A549 (cell line): ENCODE measurements at regions of chr1 and their contacts with region 1.

Region 1: GRCh38 chr1:181189691-181190363 is 101.3 kb downstream of the IER5 start:
- DNase-seq: peak; percentile 63 to 85
- ATAC-seq: peak; percentile 84 to 97
- H3K4me3 ChIP-seq: peak overlapping the region; percentile 33
- H3K27ac ChIP-seq: peak overlapping the region in 1 of 2 experiments; percentile 74; a peak in 4 of 6 replicates
- H3K4me1 ChIP-seq: no peaks in the 10 kb centered on the region
- CTCF ChIP-seq: peak; percentile 97
- EP300 ChIP-seq: no peak
- POLR2A ChIP-seq: no peak
- RAD21 ChIP-seq: peak; percentile 92 to 99

Region 2: DNA sequence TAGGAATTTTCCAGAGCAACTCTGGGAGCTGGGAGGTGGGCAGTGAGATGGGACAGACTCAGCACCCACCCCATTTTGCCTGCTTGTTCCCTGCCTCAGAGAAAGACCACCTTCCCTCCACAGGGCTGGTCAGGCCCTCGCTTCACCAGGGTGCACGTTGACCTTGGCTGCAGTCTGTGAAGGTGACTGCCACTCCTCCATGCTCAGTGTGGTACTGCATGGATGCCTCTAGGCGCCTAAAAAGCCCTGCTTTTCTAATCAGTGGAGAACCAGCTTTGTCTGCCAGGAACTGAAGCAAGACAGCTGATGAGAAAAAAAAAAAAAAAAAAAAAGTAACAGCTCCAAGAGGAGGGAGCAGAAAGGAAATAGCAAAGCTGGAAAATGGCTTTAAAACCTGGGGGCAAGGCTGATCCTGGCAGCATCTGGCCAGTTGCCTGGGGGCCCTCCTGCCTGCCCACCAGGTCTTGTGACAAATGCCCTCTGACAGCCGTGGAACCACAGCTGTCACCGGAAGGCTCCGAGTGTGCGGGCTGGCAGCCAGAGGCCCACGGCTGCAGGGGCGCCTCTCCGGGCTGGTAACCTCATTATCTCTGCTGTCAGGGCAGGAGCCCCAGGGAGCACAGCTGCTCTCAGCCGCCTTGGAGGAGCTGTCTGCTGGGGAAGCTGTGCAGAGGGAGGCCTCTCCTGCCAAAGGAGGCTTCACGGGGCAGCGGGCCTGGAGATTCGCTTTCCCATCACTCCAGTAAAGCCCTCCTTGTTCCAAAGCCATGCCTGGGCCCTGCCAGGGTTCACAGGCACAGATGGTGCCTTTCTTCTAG is 263.5 kb before region 1 on chr1:
- CTCF ChIA-PET with region 1: no interaction called
- POLR2A ChIA-PET with region 1: no interaction called
- DNase-seq: no peak
- ATAC-seq: no peak
- H3K4me3 ChIP-seq: no peak overlapping the region
- H3K27ac ChIP-seq: no peak overlapping the region
- H3K4me1 ChIP-seq: no peaks in the 10 kb centered on the region
- CTCF ChIP-seq: no peak
- EP300 ChIP-seq: no peak
- POLR2A ChIP-seq: no peak
- RAD21 ChIP-seq: no peak

Region 3: DNA sequence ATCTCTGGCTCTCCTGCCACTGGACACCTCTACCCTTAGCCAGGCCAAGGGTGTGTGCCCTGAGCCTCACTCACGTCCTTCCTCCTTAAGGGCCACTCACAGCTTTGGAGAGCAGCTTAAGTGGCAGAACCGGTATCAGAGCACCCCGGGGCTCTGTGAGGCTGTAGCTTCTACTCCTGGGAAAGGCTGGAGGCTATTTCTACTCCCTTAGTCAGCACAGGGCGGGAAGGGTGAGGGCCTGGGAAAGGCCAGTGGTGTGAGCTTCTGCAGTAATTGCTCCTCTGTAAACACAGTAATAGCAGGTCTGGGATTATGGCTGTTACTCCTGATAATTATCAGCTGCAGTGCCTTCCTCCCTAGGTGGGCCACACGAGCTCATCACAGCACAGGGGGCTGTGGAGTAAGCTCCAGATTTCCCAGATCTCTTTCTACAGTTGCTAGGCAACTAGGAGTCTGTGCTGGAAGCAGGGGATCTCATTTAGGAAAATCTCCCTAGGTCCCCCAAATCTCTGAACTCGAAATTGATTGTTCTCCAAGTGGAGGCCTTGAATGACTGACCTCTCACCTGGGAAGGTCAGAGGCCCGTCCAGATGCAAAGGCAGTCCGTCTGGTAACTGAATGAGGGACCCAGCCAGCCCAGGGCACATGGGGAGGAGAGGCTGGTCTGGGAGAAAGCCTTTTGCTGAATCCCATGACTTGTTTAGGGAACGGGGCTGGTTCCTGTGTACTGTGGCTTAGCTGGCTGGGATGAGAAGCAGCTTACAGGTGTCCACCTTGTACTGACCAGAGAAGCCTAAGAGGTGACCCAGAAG is 72.0 kb before region 1 on chr1:
- CTCF ChIA-PET with region 1: no interaction called
- POLR2A ChIA-PET with region 1: no interaction called
- DNase-seq: peak in 1 of 2 experiments; percentile 73
- ATAC-seq: peak; percentile 51 to 57
- H3K4me3 ChIP-seq: no peak overlapping the region
- H3K27ac ChIP-seq: peak overlapping the region; percentile 64 to 98
- H3K4me1 ChIP-seq: peaks cover 90% of the 10 kb centered on the region
- CTCF ChIP-seq: no peak
- EP300 ChIP-seq: no peak
- POLR2A ChIP-seq: no peak
- RAD21 ChIP-seq: no peak

Region 4: GRCh38 chr1:181149326-181150240 is 40.2 kb before region 1 on chr1:
- CTCF ChIA-PET with region 1: no interaction called
- POLR2A ChIA-PET with region 1: no interaction called
- DNase-seq: no peak
- ATAC-seq: 0 out of 6 replicates have a peak, but pooled peaks of 1 of the 2 experiments have one; percentile 37
- H3K4me3 ChIP-seq: no peak overlapping the region
- H3K27ac ChIP-seq: no peak overlapping the region
- H3K4me1 ChIP-seq: no peaks in the 10 kb centered on the region; the same call in 2 of the 3 replicates
- CTCF ChIP-seq: no peak
- EP300 ChIP-seq: no peak
- POLR2A ChIP-seq: no peak
- RAD21 ChIP-seq: no peak

Region 5: DNA sequence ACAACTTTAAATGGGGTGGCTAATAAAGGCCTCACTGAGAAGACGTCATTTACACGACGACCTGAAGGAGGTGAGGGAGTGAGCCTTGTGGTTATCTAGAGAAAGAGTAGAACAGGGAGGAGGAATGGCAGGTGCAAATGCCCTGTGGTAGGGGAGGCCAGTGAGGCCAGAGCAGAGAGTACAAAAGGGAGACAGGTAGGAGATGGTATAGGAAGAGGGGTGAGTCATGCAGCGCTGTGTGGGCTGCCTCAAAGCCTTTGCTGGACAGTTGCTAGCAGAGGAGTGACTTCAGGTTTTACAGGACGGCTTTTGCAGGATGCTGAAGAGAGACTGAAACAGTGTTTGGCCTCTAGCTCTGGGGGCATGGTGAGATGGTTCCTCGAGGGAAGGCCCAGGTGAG is 14.7 kb after region 1 on chr1:
- CTCF ChIA-PET with region 1: interaction called, 23 read pairs
- POLR2A ChIA-PET with region 1: no interaction called
- DNase-seq: no peak
- ATAC-seq: peak in 1 of 2 experiments; percentile 33; a peak in 2 of 6 replicates
- H3K4me3 ChIP-seq: no peak overlapping the region
- H3K27ac ChIP-seq: no peak overlapping the region
- H3K4me1 ChIP-seq: no peaks in the 10 kb centered on the region
- CTCF ChIP-seq: no peak
- EP300 ChIP-seq: no peak
- POLR2A ChIP-seq: no peak
- RAD21 ChIP-seq: no peak

Region 6: DNA sequence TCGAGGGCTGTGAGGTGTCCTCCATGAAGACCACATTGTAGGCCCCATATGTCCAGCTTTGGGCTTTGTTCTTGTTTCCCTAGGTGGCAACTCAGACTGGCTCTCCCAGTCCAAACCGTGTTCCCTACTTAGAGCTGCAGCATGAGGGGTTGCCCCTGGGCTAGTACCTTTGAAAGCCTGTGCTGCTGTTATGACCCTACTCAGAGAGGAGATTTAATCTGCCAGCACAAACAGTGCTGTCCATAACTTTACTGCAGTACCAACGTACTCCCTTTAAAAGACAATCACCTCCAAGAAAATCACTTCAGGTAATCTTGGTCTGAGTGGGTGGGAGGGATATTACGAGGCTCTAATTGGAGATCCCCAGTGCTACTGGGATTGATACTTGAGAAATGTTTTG is 215.1 kb after region 1 on chr1:
- CTCF ChIA-PET with region 1: interaction called, 11 read pairs
- POLR2A ChIA-PET with region 1: no interaction called
- DNase-seq: no peak
- ATAC-seq: no peak
- H3K4me3 ChIP-seq: no peak overlapping the region
- H3K27ac ChIP-seq: no peak overlapping the region
- H3K4me1 ChIP-seq: no peaks in the 10 kb centered on the region
- CTCF ChIP-seq: no peak
- EP300 ChIP-seq: no peak
- POLR2A ChIP-seq: no peak
- RAD21 ChIP-seq: no peak

Region 7: GRCh38 chr1:181416268-181416860 is 226.5 kb after region 1 on chr1:
- CTCF ChIA-PET with region 1: interaction called, 65 read pairs
- POLR2A ChIA-PET with region 1: no interaction called
- DNase-seq: no peak
- ATAC-seq: no peak
- H3K4me3 ChIP-seq: no peak overlapping the region
- H3K27ac ChIP-seq: no peak overlapping the region
- H3K4me1 ChIP-seq: no peaks in the 10 kb centered on the region
- CTCF ChIP-seq: no peak
- EP300 ChIP-seq: no peak
- POLR2A ChIP-seq: no peak
- RAD21 ChIP-seq: no peak

Region 8: DNA sequence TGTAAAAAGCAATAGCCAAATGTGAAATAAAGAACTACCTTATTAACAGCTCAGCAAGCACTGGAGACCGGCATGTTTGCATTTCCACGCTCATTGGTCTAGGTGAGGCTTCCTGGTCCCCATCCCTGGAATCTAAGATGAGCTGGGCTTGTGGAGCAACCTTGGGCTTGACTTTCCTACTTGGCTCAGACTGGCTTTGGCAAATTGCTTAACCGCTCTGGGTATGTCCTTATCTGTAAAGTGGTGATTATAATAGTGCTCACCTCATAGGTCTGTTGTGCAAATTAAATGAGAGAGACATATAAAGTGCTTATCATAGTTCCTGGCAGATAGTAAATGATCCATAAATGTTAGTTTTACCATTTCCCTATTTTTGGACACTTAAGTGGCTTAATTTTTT is 244.1 kb after region 1 on chr1:
- CTCF ChIA-PET with region 1: interaction called, 188 read pairs
- POLR2A ChIA-PET with region 1: no interaction called
- DNase-seq: no peak
- ATAC-seq: no peak
- H3K4me3 ChIP-seq: no peak overlapping the region
- H3K27ac ChIP-seq: no peak overlapping the region
- H3K4me1 ChIP-seq: peaks cover 6% of the 10 kb centered on the region; the same call in 1 of the 3 replicates
- CTCF ChIP-seq: no peak
- EP300 ChIP-seq: no peak
- POLR2A ChIP-seq: no peak
- RAD21 ChIP-seq: no peak

Region 9: GRCh38 chr1:181541947-181542346 is 352.1 kb after region 1 on chr1:
- CTCF ChIA-PET with region 1: no interaction called
- POLR2A ChIA-PET with region 1: no interaction called
- DNase-seq: no peak
- ATAC-seq: no peak
- H3K4me3 ChIP-seq: no peak overlapping the region
- H3K27ac ChIP-seq: no peak overlapping the region
- H3K4me1 ChIP-seq: no peaks in the 10 kb centered on the region
- CTCF ChIP-seq: no peak
- EP300 ChIP-seq: no peak
- POLR2A ChIP-seq: no peak
- RAD21 ChIP-seq: no peak